Posterior vena cava (tissue), 2 donors: ENCODE measurements at regions of chr6 and their contacts with region 1.

Region 1: DNA sequence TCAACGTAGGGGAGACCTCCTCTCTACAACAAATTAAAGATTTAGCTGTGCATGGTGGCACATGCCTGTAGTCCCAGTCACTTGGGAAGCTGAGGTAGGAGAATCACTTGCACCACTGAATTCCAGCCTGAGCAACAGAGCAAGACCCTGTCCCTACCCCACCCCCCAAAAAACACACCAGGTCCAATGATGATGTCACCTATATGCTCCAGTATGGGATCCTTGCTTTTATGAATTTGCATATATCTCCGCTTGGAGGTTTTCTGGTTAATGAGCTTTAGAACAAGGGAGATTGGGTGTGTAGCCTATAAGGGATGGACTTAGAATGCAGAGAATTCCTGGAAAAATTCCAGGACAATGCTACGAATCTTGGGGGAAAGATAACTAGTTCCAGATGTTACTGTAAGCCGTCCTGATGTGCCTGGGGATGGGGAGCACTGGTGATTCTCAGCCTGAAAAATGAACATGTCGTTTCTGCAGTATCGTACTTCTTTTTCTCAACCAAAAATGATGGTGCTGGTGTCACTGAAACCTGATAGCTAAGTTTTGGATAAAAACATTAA is 61.1 kb downstream of the ZBTB2 start:
- DNase-seq: no peak

Region 2: GRCh38 chr6:150897400-150897943 is 432.7 kb before region 1 on chr6:
- intact Hi-C with region 1: loop called (anchors 2 to 5 kb)
- DNase-seq: peak; percentile 24

Region 3: DNA sequence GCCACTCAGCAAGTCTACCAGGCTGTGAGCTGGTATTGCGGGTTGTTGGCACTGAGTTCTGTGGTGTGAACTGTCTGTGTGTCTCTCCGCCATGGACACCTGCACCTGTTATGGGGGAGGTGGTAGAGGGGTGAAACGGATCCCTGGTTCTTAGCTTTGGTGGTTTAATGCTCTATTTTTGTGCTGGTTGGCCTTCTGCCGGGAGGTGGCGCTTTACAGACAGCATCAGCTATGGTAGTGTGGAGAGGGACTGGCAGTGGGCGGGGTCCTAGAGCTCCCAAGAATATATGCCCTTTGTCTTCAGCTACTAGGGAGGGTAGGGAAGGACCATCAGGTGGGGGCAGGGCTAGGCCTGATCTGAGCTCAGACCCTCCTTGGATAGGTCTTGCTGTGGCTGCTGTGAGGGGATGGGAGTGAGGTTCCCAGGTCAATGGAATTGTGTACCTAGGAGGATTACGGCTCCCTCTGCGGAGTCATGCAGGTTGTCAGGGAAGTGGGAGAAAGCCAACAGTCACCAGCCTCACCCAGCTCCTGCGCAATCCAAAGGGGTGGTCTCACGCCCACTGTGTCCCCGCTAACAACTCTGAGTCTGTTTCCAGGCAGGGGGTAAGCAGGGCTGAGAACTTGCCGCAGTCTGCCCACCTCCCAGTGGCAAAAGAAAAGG is 317.9 kb after region 1 on chr6:
- intact Hi-C with region 1: no loop called
- DNase-seq: no peak